Activated CD8-positive, alpha-beta T cell treated with anti-CD3 and anti-CD28 coated beads, Interleukin-2, amount 10 ng/mL, durations not matched to agents 7 days and 5 days (primary cell): ENCODE measurements at regions of chr11 and their contacts with region 1.

Region 1: GRCh38 chr11:124673333-124674167 is at the starts of genes SIAE and SPA17:
- DNase-seq: peak; percentile 90
- ATAC-seq: peak; percentile 92
- H3K4me3 Mint-ChIP-seq: peak within 1 kb of the TSS; percentile 86
- H3K27ac Mint-ChIP-seq: peak within 1 kb of the TSS; percentile 89
- H3K4me1 Mint-ChIP-seq: peaks cover 34% of the 10 kb centered on the region
- H3K27me3 Mint-ChIP-seq: no peaks in the 10 kb centered on the region
- total RNA-seq, gene SIAE: 4.8 to 5.7 TPM
- total RNA-seq, gene SPA17: 2.6 TPM

Region 2: DNA sequence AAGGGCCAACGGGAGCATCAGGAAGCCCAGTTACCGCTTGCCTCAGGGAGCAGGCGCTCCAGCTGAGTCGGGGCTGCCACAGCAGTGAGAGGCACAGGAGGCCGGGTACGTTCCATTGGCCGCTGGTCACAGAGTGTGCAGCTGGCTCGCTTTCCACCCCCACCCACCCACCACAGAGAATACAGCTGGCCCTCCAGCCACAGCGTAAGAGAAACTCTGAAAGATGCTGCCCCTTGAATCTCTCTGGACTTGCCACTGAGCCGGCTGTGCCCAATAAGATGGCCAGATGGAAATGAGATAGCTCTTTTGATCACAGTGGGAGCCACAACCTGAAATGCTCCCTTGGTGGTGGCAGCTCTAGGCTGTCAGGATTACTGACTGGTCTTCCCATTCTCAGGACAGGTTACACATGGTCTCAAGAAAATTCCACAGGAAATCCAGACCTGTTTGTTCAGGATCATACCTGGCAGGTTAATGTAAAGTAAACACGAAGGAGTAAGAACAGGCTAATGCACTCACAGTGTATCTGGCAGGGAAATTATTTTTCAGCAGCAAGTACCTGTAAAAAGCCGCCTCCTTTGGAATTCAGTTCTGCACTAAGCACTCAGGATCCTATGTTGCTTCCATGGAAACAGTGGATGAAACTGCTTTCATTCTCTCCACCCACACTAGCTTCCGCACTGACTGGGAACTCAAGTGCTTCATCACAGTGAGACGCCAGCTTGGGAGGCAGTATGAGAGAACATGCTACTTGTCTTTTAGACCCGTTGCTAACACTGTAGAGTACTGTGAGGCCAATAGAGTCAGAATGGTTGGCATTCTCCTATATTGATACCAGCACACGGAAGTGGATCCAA is 16.5 kb before region 1 on chr11:
- CTCF ChIA-PET with region 1: interaction called, 11 read pairs
- POLR2A ChIA-PET with region 1: no interaction called
- DNase-seq: no peak
- ATAC-seq: no peak
- H3K4me3 Mint-ChIP-seq: no peak overlapping the region
- H3K27ac Mint-ChIP-seq: no peak overlapping the region
- H3K4me1 Mint-ChIP-seq: no peaks in the 10 kb centered on the region
- H3K27me3 Mint-ChIP-seq: no peaks in the 10 kb centered on the region

Region 3: GRCh38 chr11:124739479-124740276 is 66.1 kb after region 1 on chr11 and contains the start of gene NRGN:
- CTCF ChIA-PET with region 1: interaction called, 13 read pairs
- POLR2A ChIA-PET with region 1: no interaction called
- DNase-seq: peak; percentile 89
- ATAC-seq: peak; percentile 98
- H3K4me3 Mint-ChIP-seq: peak within 1 kb of the TSS; percentile 77
- H3K27ac Mint-ChIP-seq: no peak within 1 kb of the TSS
- H3K4me1 Mint-ChIP-seq: peaks cover 14% of the 10 kb centered on the region
- H3K27me3 Mint-ChIP-seq: peaks cover 44% of the 10 kb centered on the region
- total RNA-seq, gene NRGN: 5.7 to 6.1 TPM

Region 4: DNA sequence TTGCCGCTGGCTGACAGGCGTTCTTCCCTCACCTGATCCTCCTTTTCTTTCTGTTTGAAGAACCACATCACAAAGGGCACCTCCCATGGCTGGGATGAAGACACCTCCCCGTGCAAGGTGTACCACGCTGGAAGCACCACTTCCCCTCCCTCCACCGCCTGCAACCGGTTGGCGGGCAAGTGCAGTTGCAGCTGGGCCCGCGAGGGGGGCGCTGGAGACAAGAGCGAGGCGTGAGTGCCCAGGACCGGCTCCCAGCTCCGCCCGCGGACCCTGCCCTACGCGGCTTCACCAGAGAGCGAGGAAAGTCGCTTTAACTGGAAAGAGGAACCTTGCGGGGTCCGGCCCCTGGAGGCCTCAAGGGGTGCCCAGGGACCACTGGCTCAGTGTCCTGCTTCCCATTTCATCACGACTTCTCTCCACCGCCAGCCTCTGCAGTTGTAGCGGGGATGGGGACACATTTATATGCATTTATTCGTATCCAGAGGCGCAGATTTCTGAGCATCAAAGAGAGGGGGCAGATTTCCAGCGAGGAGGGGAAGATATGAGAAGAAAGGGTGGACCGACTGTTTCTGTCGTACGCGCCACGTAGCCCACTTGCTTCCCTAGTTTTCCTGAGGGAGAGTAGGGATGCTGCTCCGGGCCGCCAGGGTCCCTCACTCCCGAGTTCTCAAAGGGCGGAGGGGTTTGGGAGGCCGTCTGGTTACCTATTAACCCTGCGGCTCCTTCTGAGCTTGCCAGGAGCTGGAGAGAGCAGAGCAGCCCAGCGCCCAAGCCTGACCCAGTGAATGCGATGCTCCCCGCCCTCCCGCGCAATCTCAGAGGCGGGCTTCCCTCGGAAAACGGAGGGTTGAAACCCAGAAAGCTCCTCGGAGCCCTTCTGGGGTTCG is 85.0 kb after region 1 on chr11:
- CTCF ChIA-PET with region 1: interaction called, 108 read pairs
- POLR2A ChIA-PET with region 1: no interaction called
- DNase-seq: peak; percentile 78
- ATAC-seq: peak; percentile 70
- H3K4me3 Mint-ChIP-seq: peak overlapping the region; percentile 58
- H3K27ac Mint-ChIP-seq: no peak overlapping the region
- H3K4me1 Mint-ChIP-seq: peaks cover 39% of the 10 kb centered on the region
- H3K27me3 Mint-ChIP-seq: peaks cover 46% of the 10 kb centered on the region

Region 5: GRCh38 chr11:124778281-124778680 is 104.7 kb after region 1 on chr11:
- CTCF ChIA-PET with region 1: interaction called, 10 read pairs
- POLR2A ChIA-PET with region 1: interaction called, 3 read pairs
- DNase-seq: no peak
- ATAC-seq: no peak
- H3K4me3 Mint-ChIP-seq: no peak overlapping the region
- H3K27ac Mint-ChIP-seq: no peak overlapping the region
- H3K4me1 Mint-ChIP-seq: peaks cover 23% of the 10 kb centered on the region
- H3K27me3 Mint-ChIP-seq: no peaks in the 10 kb centered on the region

Region 6: DNA sequence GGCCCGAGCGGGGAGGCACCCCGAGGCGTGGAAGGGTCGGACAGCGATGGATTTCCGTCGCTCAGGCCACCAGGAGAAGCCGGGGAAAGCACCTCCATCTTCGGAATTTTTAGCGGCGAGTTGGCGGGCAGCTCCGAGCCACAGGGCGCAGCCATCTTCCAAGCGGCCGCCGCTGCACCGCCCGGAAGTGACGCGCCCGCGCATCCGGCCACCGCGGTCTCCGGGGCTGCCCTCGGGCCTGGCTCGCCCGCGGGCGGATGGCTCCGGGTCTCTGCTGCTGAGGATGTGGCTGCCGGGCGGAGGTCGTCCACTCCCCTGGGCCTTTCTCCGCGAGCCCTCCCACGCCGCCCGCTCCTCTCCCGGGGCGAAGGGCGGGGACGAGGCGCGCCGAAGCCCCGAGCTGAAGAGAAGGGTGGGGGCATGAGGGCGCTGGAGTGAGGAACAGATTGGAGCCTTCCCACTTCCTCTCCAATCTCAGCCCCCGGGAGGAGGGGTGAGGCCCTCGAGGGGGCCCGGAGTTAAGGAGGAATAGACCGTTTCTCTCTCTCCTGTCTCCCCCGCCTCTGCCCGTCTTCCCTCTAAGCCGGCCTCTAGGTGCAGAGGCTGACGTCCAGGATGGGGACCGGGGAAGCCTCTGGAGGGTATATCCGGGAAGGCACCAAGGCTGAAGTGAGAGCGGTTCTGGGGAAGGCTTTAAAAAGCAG is 126.8 kb after region 1 on chr11 and contains the start of gene MSANTD2:
- CTCF ChIA-PET with region 1: interaction called, 47 read pairs
- POLR2A ChIA-PET with region 1: interaction called, 4 read pairs
- DNase-seq: peak; percentile 83
- ATAC-seq: peak; percentile 90
- H3K4me3 Mint-ChIP-seq: peak within 1 kb of the TSS; percentile 85
- H3K27ac Mint-ChIP-seq: peak within 1 kb of the TSS; percentile 93
- H3K4me1 Mint-ChIP-seq: peaks cover 26% of the 10 kb centered on the region
- H3K27me3 Mint-ChIP-seq: peaks cover 12% of the 10 kb centered on the region
- total RNA-seq, gene MSANTD2: 9.1 to 10.2 TPM

Region 7: GRCh38 chr11:124865921-124866583 is 192.5 kb after region 1 on chr11:
- CTCF ChIA-PET with region 1: interaction called, 17 read pairs
- POLR2A ChIA-PET with region 1: no interaction called
- DNase-seq: peak; percentile 60
- ATAC-seq: peak; percentile 57
- H3K4me3 Mint-ChIP-seq: no peak overlapping the region
- H3K27ac Mint-ChIP-seq: no peak overlapping the region
- H3K4me1 Mint-ChIP-seq: peaks cover 21% of the 10 kb centered on the region
- H3K27me3 Mint-ChIP-seq: peaks cover 89% of the 10 kb centered on the region